SK-N-SH (cell line): ENCODE measurements at regions of chr5 and their contacts with region 1.

Region 1: DNA sequence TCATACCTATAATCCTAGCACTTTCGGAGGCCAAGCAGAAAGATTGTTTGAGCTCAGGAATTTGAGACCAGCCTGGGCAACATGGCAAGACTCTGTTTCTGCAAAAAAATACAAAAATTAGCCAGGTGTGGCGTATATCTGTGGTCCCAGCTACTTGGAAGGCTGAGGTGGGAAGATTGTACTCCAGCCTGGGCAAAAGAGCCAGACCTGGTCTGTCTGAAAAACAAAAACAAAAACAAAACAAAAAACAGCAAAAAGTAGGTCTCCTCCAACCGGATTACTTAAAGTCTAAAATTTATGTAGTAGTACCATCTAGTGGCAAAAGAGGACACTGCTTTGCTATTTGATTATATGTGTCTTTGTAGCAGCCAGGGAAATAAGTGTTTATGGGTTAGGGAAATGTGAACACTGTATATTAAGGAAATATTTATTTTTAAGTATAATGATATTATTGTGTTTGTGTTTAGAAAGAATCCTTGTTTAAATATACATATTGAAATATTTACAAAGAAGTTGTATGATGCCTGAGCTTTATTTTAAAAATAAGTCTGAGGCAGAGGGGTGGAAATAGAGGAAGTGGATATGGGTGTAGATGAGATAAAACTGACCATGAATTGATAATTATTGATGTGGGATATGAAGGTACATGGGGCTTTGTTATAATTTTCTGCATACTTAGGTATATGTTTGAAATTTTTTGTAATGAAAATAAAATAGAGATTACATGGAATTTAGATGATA is 20.0 kb downstream of the APC start:
- DNase-seq: peak; percentile 49
- H3K4me3 ChIP-seq: no peak overlapping the region
- H3K27ac ChIP-seq: no peak overlapping the region
- H3K4me1 ChIP-seq: peaks cover 0 to 10% of the 10 kb centered on the region in 2 experiments; a peak in 2 of 4 replicates
- H3K27me3 ChIP-seq: no peaks in the 10 kb centered on the region
- CTCF ChIP-seq: peak; percentile 87
- EP300 ChIP-seq: no peak
- RAD21 ChIP-seq: peak; percentile 90

Region 2: GRCh38 chr5:112551419-112552032 is 206.1 kb before region 1 on chr5:
- CTCF ChIA-PET with region 1: interaction called, 112 read pairs
- POLR2A ChIA-PET with region 1: no interaction called
- DNase-seq: peak; percentile 42
- H3K4me3 ChIP-seq: no peak overlapping the region; a peak in 1 of 4 replicates
- H3K27ac ChIP-seq: no peak overlapping the region
- H3K4me1 ChIP-seq: peaks cover 0 to 3% of the 10 kb centered on the region in 2 experiments; a peak in 1 of 4 replicates
- H3K27me3 ChIP-seq: no peaks in the 10 kb centered on the region
- CTCF ChIP-seq: peak; percentile 82
- EP300 ChIP-seq: no peak
- RAD21 ChIP-seq: peak; percentile 95

Region 3: DNA sequence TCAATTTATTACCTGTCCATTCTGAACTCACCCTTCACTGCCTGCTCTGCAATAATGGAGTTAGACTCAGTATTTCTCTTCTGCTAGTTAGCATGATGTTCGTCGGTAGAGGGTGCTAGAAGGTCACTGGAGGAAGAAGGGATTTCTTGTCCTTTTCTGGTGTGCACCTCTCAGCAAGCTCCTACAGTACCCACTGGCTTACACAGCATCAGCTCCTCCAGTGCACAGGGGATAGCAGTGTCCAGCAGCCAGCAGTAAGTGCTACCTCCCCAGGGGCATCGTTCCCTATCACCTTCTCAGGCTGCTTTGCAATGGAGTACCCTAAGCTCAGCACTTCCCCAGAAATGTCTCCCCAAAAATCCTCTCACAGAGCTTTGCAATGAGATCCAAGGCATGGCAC is 65.9 kb before region 1 on chr5:
- CTCF ChIA-PET with region 1: interaction called, 76 read pairs
- POLR2A ChIA-PET with region 1: no interaction called
- DNase-seq: peak; percentile 16
- H3K4me3 ChIP-seq: no peak overlapping the region
- H3K27ac ChIP-seq: no peak overlapping the region
- H3K4me1 ChIP-seq: no peaks in the 10 kb centered on the region; a peak in 1 of 4 replicates
- H3K27me3 ChIP-seq: no peaks in the 10 kb centered on the region
- CTCF ChIP-seq: peak; percentile 55
- EP300 ChIP-seq: no peak
- RAD21 ChIP-seq: peak; percentile 80

Region 4: GRCh38 chr5:112703866-112704820 is 53.5 kb before region 1 on chr5:
- CTCF ChIA-PET with region 1: interaction called, 12 read pairs
- POLR2A ChIA-PET with region 1: no interaction called
- DNase-seq: no peak
- H3K4me3 ChIP-seq: no peak overlapping the region
- H3K27ac ChIP-seq: peak overlapping the region; percentile 57 to 77
- H3K4me1 ChIP-seq: peaks cover 18 to 23% of the 10 kb centered on the region in 2 experiments; a peak in 3 of 4 replicates
- H3K27me3 ChIP-seq: no peaks in the 10 kb centered on the region
- CTCF ChIP-seq: no peak
- EP300 ChIP-seq: no peak
- RAD21 ChIP-seq: no peak

Region 5: GRCh38 chr5:112737463-112738190 is 20.0 kb before region 1 on chr5 and contains the start of gene APC:
- CTCF ChIA-PET with region 1: interaction called, 25 read pairs
- POLR2A ChIA-PET with region 1: no interaction called
- DNase-seq: peak; percentile 93
- H3K4me3 ChIP-seq: peak within 1 kb of the TSS; percentile 80 to 89
- H3K27ac ChIP-seq: peak within 1 kb of the TSS; percentile 78 to 89
- H3K4me1 ChIP-seq: peaks cover 10 to 22% of the 10 kb centered on the region in 2 experiments; a peak in 3 of 4 replicates
- H3K27me3 ChIP-seq: no peaks in the 10 kb centered on the region
- CTCF ChIP-seq: no peak
- EP300 ChIP-seq: no peak
- RAD21 ChIP-seq: no peak
- polyA plus RNA-seq, gene APC: 5.1 and 6.2 TPM in 2 replicates

Region 6: GRCh38 chr5:112776301-112776856 is 18.7 kb after region 1 on chr5:
- CTCF ChIA-PET with region 1: interaction called, 18 read pairs
- POLR2A ChIA-PET with region 1: no interaction called
- DNase-seq: no peak
- H3K4me3 ChIP-seq: no peak overlapping the region
- H3K27ac ChIP-seq: peak overlapping the region in 1 of 2 experiments; percentile 44; a peak in 2 of 4 replicates
- H3K4me1 ChIP-seq: no peaks in the 10 kb centered on the region; a peak in 1 of 4 replicates
- H3K27me3 ChIP-seq: no peaks in the 10 kb centered on the region
- CTCF ChIP-seq: no peak
- EP300 ChIP-seq: no peak
- RAD21 ChIP-seq: no peak